ENCODE measurements at regions of chr13 and their contacts with region 1.

Region 1: GRCh38 chr13:23510979-23511735 is 59.1 kb upstream of the TNFRSF19 start:
- DNase-seq: peak; percentile 96

Region 2: GRCh38 chr13:23567906-23568460 is 56.8 kb after region 1 on chr13:
- in situ Hi-C with region 1: loop called (anchors 10 kb)
- DNase-seq: peak; percentile 76

Measured in SK-MEL-5 (cell line).